Stomach (tissue), 19 donors: ENCODE measurements at regions of chr17 and their contacts with region 1.

Region 1: DNA sequence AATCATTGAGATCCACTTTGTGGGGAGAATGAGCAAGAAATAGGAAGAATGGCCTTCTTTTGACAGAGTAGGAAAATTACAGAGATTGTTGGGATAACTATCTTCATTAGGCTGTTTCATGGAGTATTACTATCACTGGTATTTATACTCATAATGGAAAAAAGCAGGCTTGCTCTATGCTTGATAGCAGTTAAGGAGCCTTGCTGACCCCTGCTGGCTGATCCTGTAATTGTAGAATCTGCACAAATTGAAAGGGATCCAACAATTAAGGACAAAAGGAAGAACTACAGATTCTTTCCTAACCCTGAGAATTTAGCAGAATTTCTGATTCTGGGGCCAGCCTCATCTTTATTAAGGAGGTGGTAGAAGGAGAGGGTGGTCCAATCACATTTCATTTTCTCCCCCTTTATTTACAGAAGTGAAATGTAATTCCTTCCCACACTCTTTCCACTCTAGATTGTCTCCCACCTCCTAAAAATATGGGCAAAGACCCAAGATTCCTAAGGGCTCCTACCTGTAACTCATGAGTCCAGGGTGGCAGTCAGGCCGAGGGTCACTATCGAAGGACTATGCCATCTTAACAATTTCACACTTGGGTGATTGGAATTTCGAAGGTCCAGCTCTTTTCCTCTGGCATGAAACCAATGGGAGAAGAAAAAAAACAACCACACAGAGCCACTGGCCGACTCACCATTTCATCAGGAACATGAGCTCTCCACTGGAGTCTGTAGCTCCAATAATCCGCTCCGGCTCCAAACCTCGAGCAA is 26.3 kb downstream of the NFE2L1 start:
- DNase-seq: peak; percentile 83 to 90
- H3K4me3 ChIP-seq: no peak overlapping the region
- H3K27ac ChIP-seq: no peak overlapping the region
- H3K4me1 ChIP-seq: no peaks in the 10 kb centered on the region
- H3K27me3 ChIP-seq: no peaks in the 10 kb centered on the region
- CTCF ChIP-seq: peak in 5 of 7 experiments; percentile 57 to 87 (median 73)
- EP300 ChIP-seq: no peak
- POLR2A ChIP-seq: no peak

Region 2: DNA sequence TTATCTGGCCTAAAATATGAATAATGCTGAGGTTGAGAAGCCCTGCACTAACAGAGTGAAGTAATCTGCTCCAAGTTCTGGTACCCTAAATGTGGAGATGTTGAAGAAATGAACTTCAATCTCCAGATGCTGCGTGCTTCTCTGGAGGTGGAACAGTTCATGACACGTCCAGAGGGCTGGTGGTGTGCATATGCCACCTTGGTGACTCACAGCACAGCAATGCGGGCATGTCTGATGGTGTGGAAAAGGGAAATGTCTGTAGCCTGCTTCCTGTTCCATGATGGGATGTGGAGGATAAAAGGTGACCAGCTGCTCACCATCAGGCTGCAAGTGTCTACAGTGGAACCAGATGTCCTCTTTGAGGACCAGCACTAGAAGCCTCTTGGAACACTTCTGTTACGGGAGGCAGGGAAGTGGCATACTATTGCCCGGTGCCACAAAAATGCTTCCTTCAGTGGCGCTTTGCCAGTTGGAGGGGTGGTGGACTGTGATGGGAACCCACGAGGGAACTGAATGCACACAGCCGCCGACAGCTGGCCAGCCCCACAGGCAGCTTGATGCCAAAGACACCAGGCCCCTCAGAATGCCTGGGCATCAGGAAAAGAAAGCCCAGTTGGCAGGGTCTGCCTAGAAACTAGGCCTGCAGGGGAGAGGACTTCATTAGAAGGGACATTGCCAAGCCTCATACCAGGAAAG is 53.0 kb after region 1 on chr17:
- intact Hi-C with region 1: loop called (anchors 5 kb)
- DNase-seq: no peak
- H3K4me3 ChIP-seq: no peak overlapping the region
- H3K27ac ChIP-seq: no peak overlapping the region
- H3K4me1 ChIP-seq: no peaks in the 10 kb centered on the region
- H3K27me3 ChIP-seq: no peaks in the 10 kb centered on the region
- CTCF ChIP-seq: no peak
- EP300 ChIP-seq: no peak
- POLR2A ChIP-seq: no peak